ENCODE measurements at regions of chr4 and their contacts with region 1.

Region 1: GRCh38 chr4:184649026-184649970 is at the starts of genes CASP3 and PRIMPOL:
- DNase-seq: peak; percentile 98
- H3K4me3 ChIP-seq: peak within 1 kb of the TSS; percentile 85
- H3K27ac ChIP-seq: peak within 1 kb of the TSS; percentile 99
- H3K4me1 ChIP-seq: peaks cover 7% of the 10 kb centered on the region
- H3K27me3 ChIP-seq: no peaks in the 10 kb centered on the region
- CTCF ChIP-seq: no peak
- total RNA-seq, gene CASP3: 45.4 to 57.9 TPM
- total RNA-seq, gene PRIMPOL: 16.0 to 21.6 TPM

Region 2: GRCh38 chr4:184733654-184734524 is 84.6 kb after region 1 on chr4 and contains the start of gene CENPU:
- intact Hi-C with region 1: loop called (anchors 10 kb)
- DNase-seq: peak; percentile 98
- H3K4me3 ChIP-seq: peak within 1 kb of the TSS; percentile 85
- H3K27ac ChIP-seq: peak within 1 kb of the TSS; percentile 42
- H3K4me1 ChIP-seq: no peaks in the 10 kb centered on the region
- H3K27me3 ChIP-seq: no peaks in the 10 kb centered on the region
- CTCF ChIP-seq: no peak
- total RNA-seq, gene CENPU: 11.4 to 28.1 TPM